ENCODE measurements at regions of chr1 and their contacts with region 1.

Region 1: GRCh38 chr1:207963427-207964194 is 52.7 kb upstream of the CD34 start:
- DNase-seq: peak; percentile 62 to 92
- H3K4me3 ChIP-seq: peak overlapping the region; percentile 49; the same call in 1 of the 2 replicates
- H3K27ac ChIP-seq: no peak overlapping the region
- H3K4me1 ChIP-seq: peaks cover 4% of the 10 kb centered on the region
- H3K27me3 ChIP-seq: 0 out of 2 replicates have a peak, but pooled peaks cover 8% of the 10 kb centered on the region
- CTCF ChIP-seq: peak; percentile 92

Region 2: GRCh38 chr1:207797229-207797961 is 166.2 kb before region 1 on chr1:
- CTCF ChIA-PET with region 1: interaction called, 6 read pairs
- POLR2A ChIA-PET with region 1: no interaction called
- intact Hi-C with region 1: loop called (anchors 1 kb)
- DNase-seq: peak; percentile 76 to 79
- H3K4me3 ChIP-seq: no peak overlapping the region
- H3K27ac ChIP-seq: peak overlapping the region; percentile 32; the same call in 1 of the 2 replicates
- H3K4me1 ChIP-seq: no peaks in the 10 kb centered on the region
- H3K27me3 ChIP-seq: no peaks in the 10 kb centered on the region
- CTCF ChIP-seq: peak; percentile 87

Region 3: DNA sequence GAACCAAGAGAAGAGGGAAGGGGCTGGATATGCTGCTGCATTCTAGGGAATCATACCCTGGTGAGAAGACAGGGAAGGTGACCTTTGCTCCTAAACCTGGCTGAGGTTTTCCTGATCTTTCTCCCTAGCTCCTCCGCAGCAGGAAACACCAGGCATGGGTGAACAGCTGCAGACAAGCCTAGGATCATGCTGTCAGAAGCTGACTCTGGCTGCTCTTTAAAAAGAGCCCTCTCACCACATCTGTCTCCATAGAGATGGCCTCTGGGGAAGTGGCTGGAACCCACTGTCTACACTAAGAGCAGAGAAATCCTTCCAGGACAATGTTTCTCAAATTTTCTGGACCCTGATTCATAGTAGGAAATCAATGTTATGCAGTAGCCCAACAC is 110.2 kb before region 1 on chr1:
- CTCF ChIA-PET with region 1: interaction called, 11 read pairs
- POLR2A ChIA-PET with region 1: no interaction called
- intact Hi-C with region 1: no loop called
- DNase-seq: no peak
- H3K4me3 ChIP-seq: no peak overlapping the region
- H3K27ac ChIP-seq: no peak overlapping the region
- H3K4me1 ChIP-seq: peaks cover 9% of the 10 kb centered on the region
- H3K27me3 ChIP-seq: no peaks in the 10 kb centered on the region
- CTCF ChIP-seq: no peak

Region 4: GRCh38 chr1:207885129-207886032 is 78.2 kb before region 1 on chr1:
- CTCF ChIA-PET with region 1: interaction called, 18 read pairs
- POLR2A ChIA-PET with region 1: no interaction called
- intact Hi-C with region 1: loop called (anchors 1 kb)
- DNase-seq: peak; percentile 50 to 53
- H3K4me3 ChIP-seq: no peak overlapping the region
- H3K27ac ChIP-seq: no peak overlapping the region
- H3K4me1 ChIP-seq: no peaks in the 10 kb centered on the region
- H3K27me3 ChIP-seq: peaks cover 6% of the 10 kb centered on the region
- CTCF ChIP-seq: peak; percentile 91

Region 5: DNA sequence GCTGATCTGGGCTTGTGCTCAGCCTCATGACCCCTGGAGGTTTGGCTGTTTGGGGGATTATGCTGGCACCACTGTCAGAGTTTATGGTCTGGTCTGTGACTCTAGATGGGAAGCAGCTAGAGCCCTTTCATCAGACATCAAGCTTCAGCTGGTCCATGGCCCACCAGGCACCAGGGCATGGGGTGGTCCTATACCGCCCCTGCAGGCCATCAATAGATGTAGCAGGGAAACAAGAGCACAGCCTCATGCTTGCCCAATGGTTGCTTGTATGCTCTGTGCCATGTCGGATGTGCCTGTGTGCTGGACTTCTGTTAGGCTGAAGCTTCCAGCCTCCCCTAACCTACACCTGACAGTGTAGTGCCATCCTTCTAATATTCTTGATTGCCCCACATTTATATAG is 18.4 kb after region 1 on chr1:
- CTCF ChIA-PET with region 1: interaction called, 16 read pairs
- POLR2A ChIA-PET with region 1: no interaction called
- intact Hi-C with region 1: no loop called
- DNase-seq: no peak
- H3K4me3 ChIP-seq: no peak overlapping the region
- H3K27ac ChIP-seq: no peak overlapping the region
- H3K4me1 ChIP-seq: no peaks in the 10 kb centered on the region
- H3K27me3 ChIP-seq: peaks cover 31% of the 10 kb centered on the region
- CTCF ChIP-seq: peak; percentile 52

Region 6: DNA sequence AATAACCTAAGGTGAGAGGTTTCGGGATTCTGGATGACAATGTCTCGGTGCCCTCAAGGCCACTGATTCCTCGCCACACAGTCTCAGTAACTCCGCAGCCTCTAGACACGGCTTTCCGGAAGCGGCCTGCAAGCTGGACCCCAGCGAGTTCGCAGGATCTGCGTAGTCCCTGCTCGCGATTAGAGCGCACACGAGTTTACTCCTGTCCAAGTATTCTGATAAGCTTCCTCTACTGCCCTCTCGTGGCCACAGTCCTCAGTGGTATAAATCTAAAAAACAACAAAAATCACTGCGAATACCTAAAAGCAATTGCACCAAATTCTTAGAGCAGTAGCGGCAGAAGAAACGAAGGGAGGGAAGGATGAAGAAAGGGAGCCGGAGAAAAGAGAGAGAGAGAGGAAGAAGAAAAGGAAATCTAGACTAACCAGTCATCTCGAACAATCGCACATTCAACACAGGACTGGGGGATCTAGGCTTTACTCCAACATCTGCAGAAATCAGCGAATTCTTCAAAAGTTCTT is 281.6 kb after region 1 on chr1:
- CTCF ChIA-PET with region 1: interaction called, 5 read pairs
- POLR2A ChIA-PET with region 1: interaction called, 6 read pairs
- intact Hi-C with region 1: loop called (anchors 1 kb)
- DNase-seq: peak; percentile 74 to 76
- H3K4me3 ChIP-seq: peak overlapping the region; percentile 94
- H3K27ac ChIP-seq: no peak overlapping the region
- H3K4me1 ChIP-seq: peaks cover 28% of the 10 kb centered on the region
- H3K27me3 ChIP-seq: peaks cover 4% of the 10 kb centered on the region; the same call in 1 of the 2 replicates
- CTCF ChIP-seq: peak; percentile 86

Region 7: GRCh38 chr1:209363112-209363511 is 1399.5 kb after region 1 on chr1:
- CTCF ChIA-PET with region 1: interaction called, 20 read pairs
- POLR2A ChIA-PET with region 1: no interaction called
- intact Hi-C with region 1: no loop called
- DNase-seq: peak; percentile 55 to 76
- H3K4me3 ChIP-seq: no peak overlapping the region
- H3K27ac ChIP-seq: peak overlapping the region; percentile 26; the same call in 1 of the 2 replicates
- H3K4me1 ChIP-seq: peaks cover 32% of the 10 kb centered on the region
- H3K27me3 ChIP-seq: no peaks in the 10 kb centered on the region
- CTCF ChIP-seq: no peak

Measured in PC-9 (cell line).